ENCODE measurements at regions of chr10 and their contacts with region 1.

Region 1: GRCh38 chr10:64508029-64508661 is 986.9 kb downstream of the REEP3 start:
- DNase-seq: no peak
- ATAC-seq: no peak
- H3K4me3 ChIP-seq: no peak overlapping the region
- H3K27ac ChIP-seq: no peak overlapping the region
- H3K4me1 ChIP-seq: peaks cover 15% of the 10 kb centered on the region
- H3K27me3 ChIP-seq: no peaks in the 10 kb centered on the region
- CTCF ChIP-seq: no peak

Region 2: GRCh38 chr10:64115913-64116643 is 392.1 kb before region 1 on chr10:
- CTCF ChIA-PET with region 1: no interaction called
- POLR2A ChIA-PET with region 1: no interaction called
- intact Hi-C with region 1: loop called (anchors 10 kb)
- DNase-seq: peak; percentile 54
- ATAC-seq: peak; percentile 29; the same call in 1 of the 2 replicates
- H3K4me3 ChIP-seq: no peak overlapping the region; the same call in 1 of the 2 replicates
- H3K27ac ChIP-seq: peak overlapping the region; percentile 71
- H3K4me1 ChIP-seq: peaks cover 40% of the 10 kb centered on the region
- H3K27me3 ChIP-seq: no peaks in the 10 kb centered on the region
- CTCF ChIP-seq: peak; percentile 84

Region 3: GRCh38 chr10:64430690-64431323 is 77.3 kb before region 1 on chr10:
- CTCF ChIA-PET with region 1: no interaction called
- POLR2A ChIA-PET with region 1: no interaction called
- intact Hi-C with region 1: loop called (anchors 1 kb)
- DNase-seq: peak; percentile 81
- ATAC-seq: peak; percentile 99
- H3K4me3 ChIP-seq: no peak overlapping the region
- H3K27ac ChIP-seq: no peak overlapping the region
- H3K4me1 ChIP-seq: no peaks in the 10 kb centered on the region
- H3K27me3 ChIP-seq: no peaks in the 10 kb centered on the region
- CTCF ChIP-seq: peak; percentile 88

Region 4: DNA sequence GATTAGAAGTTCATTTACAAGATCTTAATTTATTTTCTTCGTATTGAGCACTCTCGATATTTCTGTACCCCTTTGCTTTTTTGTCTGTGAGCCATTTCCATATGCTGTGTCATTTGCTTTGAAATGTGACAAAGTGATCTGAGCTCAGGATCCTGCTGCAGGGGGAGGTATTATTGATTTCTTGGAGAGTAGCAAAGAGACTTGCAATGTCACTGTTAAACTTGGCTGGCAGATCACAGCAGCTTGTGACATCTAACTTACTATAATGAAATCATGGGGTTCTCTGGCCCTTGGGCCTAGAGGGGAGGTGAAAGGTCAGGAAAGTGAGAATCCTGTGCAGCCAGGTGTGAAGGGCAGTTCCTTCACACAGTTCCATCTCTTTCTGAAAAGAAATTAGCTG is 63.6 kb before region 1 on chr10:
- CTCF ChIA-PET with region 1: no interaction called
- POLR2A ChIA-PET with region 1: no interaction called
- intact Hi-C with region 1: loop called (anchors 1 kb)
- DNase-seq: no peak
- ATAC-seq: peak; percentile 43
- H3K4me3 ChIP-seq: no peak overlapping the region
- H3K27ac ChIP-seq: peak overlapping the region; percentile 13
- H3K4me1 ChIP-seq: 0 out of 2 replicates have a peak, but pooled peaks cover 3% of the 10 kb centered on the region
- H3K27me3 ChIP-seq: no peaks in the 10 kb centered on the region
- CTCF ChIP-seq: no peak

Region 5: DNA sequence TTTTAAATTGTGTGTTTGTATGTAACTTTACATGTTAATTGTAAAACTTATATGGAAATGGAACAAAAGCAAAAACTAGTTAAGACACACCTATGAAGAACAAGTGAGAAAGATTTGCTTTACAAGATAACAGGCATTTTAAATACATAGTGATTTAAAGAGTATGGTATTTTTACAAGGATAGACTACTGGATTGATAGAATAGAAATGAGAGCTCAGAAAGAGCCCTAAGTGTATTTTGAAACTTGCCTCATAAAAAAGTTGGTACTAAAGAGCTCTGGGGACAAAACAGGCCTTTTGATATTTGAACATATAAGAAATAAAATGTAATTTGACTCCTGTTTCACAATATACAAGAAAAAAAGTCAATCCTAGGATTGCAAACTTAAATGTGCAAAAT is 58.5 kb before region 1 on chr10:
- CTCF ChIA-PET with region 1: no interaction called
- POLR2A ChIA-PET with region 1: no interaction called
- intact Hi-C with region 1: loop called (anchors 1 kb)
- DNase-seq: peak; percentile 30
- ATAC-seq: peak; percentile 92
- H3K4me3 ChIP-seq: no peak overlapping the region
- H3K27ac ChIP-seq: no peak overlapping the region
- H3K4me1 ChIP-seq: 0 out of 2 replicates have a peak, but pooled peaks cover 3% of the 10 kb centered on the region
- H3K27me3 ChIP-seq: no peaks in the 10 kb centered on the region
- CTCF ChIP-seq: no peak

Region 6: DNA sequence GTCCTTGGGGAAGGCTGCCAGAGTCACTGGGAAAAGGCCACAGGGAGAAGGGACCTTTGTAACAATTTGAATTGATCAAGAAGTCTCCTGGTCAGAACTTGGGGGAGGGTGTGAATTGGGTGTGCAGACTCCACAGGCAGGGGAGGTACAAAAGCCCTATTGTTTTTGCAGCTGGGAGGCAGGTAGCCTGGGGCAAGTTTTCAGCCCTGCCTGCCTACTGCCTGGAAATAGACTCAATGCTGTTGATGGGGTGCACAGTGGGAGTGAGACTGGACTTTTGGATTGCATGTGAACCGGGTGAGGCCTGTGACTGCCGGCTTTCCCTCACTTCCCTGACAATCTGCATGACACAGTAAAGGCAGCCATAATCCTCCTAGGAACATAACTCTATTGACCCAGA is 39.9 kb before region 1 on chr10:
- CTCF ChIA-PET with region 1: no interaction called
- POLR2A ChIA-PET with region 1: no interaction called
- intact Hi-C with region 1: loop called (anchors 2 kb)
- DNase-seq: peak; percentile 68
- ATAC-seq: peak; percentile 79
- H3K4me3 ChIP-seq: no peak overlapping the region
- H3K27ac ChIP-seq: peak overlapping the region; percentile 51
- H3K4me1 ChIP-seq: peaks cover 16% of the 10 kb centered on the region
- H3K27me3 ChIP-seq: no peaks in the 10 kb centered on the region
- CTCF ChIP-seq: no peak

Region 7: GRCh38 chr10:64558094-64558856 is 50.1 kb after region 1 on chr10:
- CTCF ChIA-PET with region 1: no interaction called
- POLR2A ChIA-PET with region 1: no interaction called
- intact Hi-C with region 1: no loop called
- DNase-seq: no peak
- ATAC-seq: no peak
- H3K4me3 ChIP-seq: no peak overlapping the region
- H3K27ac ChIP-seq: no peak overlapping the region
- H3K4me1 ChIP-seq: no peaks in the 10 kb centered on the region
- H3K27me3 ChIP-seq: peaks cover 2% of the 10 kb centered on the region; the same call in 1 of the 2 replicates
- CTCF ChIP-seq: no peak